ENCODE measurements at regions of chr10 and their contacts with region 1.

Region 1: GRCh38 chr10:33330543-33331378 is 3.7 kb downstream of the NRP1 start:
- DNase-seq: peak; percentile 86
- H3K4me3 ChIP-seq: peak overlapping the region; percentile 82
- H3K27ac ChIP-seq: peak overlapping the region; percentile 99
- H3K4me1 ChIP-seq: peaks cover 92% of the 10 kb centered on the region
- H3K27me3 ChIP-seq: no peaks in the 10 kb centered on the region
- CTCF ChIP-seq: peak; percentile 94

Region 2: DNA sequence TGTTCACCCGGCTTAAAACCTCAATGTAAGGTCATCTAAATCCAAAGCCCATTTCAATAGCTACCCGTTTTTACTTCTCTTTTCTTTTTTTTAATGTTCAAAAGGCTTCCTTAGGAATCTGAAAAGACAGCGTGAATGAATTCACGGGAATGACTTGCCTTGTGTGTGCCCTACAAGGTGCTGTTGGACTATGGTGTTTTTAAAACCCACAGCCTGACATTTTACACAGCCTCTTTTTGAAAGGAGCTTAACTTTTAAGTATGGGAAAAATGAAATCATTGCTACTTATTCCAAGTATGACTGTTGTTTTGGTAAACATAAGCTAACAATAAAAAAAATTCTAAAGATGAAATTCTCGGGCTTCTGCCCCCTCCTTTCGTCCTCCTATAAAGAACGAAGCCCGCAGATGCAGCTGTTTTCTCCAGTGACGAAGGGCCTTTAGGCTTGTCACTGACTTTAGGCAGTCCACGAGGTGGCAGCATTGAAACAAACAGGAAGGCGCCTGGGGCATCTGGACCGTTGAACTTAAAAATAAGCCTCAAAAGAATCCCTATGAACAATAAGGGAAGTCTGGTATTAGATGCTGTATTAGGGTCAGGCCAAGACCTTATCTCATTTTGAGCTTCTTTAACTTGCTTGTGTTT is 137.6 kb before region 1 on chr10:
- intact Hi-C with region 1: loop called (anchors 10 kb)
- DNase-seq: peak; percentile 76
- H3K4me3 ChIP-seq: no peak overlapping the region
- H3K27ac ChIP-seq: peak overlapping the region; percentile 83
- H3K4me1 ChIP-seq: peaks cover 64% of the 10 kb centered on the region
- H3K27me3 ChIP-seq: no peaks in the 10 kb centered on the region
- CTCF ChIP-seq: peak; percentile 87

Region 3: GRCh38 chr10:33238643-33239042 is 92.1 kb before region 1 on chr10:
- intact Hi-C with region 1: no loop called
- DNase-seq: no peak
- H3K4me3 ChIP-seq: no peak overlapping the region
- H3K27ac ChIP-seq: peak overlapping the region; percentile 76
- H3K4me1 ChIP-seq: peaks cover 86% of the 10 kb centered on the region
- H3K27me3 ChIP-seq: no peaks in the 10 kb centered on the region
- CTCF ChIP-seq: no peak

Region 4: DNA sequence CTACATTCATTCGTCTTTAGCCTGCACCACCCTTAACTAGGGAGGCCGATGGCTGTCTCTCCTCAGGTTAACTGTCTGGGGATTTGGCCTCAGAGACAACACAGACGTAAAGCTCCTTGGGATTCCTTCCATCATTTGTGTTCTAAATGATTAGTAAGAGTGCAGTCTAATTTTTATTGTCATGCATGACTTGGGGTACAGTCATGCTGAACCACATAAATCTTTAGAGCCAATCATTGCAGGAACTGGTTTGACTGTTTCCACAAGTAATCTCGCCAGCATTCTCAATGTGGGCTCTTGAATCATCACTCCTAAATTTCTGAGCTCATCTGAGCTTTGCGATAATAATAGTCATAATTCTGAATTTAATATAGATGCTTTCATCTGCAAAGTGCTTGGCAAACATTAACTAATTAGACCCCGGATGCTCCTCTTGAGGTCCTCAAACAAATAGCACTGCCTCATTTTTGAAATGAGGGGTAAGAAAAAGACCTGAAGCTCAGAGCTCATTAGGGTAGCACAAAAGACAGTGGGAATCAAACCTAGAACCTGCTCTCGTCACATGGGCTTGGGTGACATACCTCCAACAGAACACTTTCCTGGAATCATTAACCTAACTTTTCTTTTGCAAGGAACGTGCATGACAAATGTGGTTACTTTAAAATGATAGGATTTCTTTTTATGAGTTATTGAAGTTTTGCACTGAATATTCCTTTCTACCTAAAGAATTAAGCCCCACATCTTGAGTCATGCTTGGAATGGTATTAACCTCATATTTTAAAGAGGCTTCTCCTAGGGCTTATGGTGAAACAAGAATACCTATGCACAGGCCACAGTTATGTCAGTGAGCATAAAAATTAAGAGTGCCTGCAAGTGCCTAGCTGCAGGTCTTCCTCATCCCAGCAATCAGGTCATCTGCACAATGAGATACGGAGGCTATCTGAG is 122.6 kb after region 1 on chr10:
- intact Hi-C with region 1: no loop called
- DNase-seq: no peak
- H3K4me3 ChIP-seq: no peak overlapping the region
- H3K27ac ChIP-seq: no peak overlapping the region
- H3K4me1 ChIP-seq: peaks cover 5% of the 10 kb centered on the region
- H3K27me3 ChIP-seq: no peaks in the 10 kb centered on the region
- CTCF ChIP-seq: no peak

Region 5: DNA sequence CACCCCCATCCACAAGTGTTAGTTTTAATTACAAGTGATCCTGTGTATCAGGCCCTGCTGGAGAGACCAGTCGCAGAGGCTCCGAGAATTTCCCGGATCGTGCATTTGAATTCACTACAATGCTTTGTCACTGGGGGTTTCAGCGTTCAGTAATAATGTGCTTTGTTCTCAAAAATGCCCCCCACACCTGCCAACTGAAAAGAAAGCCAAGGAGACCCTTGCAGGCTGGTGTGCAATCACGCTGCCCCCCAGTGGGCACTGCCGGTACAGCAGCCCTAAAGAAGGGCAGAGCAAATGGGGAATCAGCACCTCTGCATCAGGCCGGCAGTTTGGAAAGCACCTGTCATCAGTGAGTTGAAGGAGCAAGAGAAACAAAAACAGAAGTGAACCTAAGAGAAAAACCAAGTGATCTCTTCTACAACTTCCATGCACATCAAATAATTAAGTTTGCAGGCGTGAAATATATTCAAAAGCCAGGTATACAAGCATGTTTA is 1306.7 kb after region 1 on chr10:
- intact Hi-C with region 1: loop called (anchors 5 kb)
- DNase-seq: peak; percentile 57
- H3K4me3 ChIP-seq: no peak overlapping the region
- H3K27ac ChIP-seq: no peak overlapping the region
- H3K4me1 ChIP-seq: peaks cover 19% of the 10 kb centered on the region
- H3K27me3 ChIP-seq: no peaks in the 10 kb centered on the region
- CTCF ChIP-seq: peak; percentile 98

Measured in left ventricle myocardium inferior (tissue), 1 donor.